ENCODE measurements at regions of chr7 and their contacts with region 1.

Region 1: DNA sequence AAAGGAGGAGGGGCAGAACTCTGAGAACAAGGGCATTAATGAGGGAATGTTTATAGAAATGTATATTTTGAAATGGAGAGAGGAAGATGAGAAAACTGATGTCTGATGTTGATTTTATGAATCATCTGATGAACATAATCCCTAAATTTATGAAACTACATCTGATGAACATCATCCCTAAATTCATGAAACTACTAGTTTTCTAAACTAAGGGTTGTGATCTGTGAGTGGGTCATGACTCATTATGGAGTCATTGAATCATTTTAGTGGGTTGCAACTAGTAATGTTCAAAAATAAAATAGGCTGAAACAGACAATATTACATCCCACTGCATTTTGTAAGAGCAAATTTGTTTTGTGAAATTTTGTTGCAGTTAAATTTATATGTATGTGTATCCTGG is 442.6 kb upstream of the TEX47 start:
- DNase-seq: peak; percentile 28
- ATAC-seq: no peak
- H3K4me3 ChIP-seq: no peak overlapping the region
- H3K27ac ChIP-seq: no peak overlapping the region
- H3K4me1 ChIP-seq: no peaks in the 10 kb centered on the region
- H3K27me3 ChIP-seq: no peaks in the 10 kb centered on the region
- CTCF ChIP-seq: no peak
- POLR2A ChIP-seq: no peak
- RAD21 ChIP-seq: no peak

Region 2: GRCh38 chr7:89072081-89072480 is 166.1 kb before region 1 on chr7:
- CTCF ChIA-PET with region 1: no interaction called
- POLR2A ChIA-PET with region 1: no interaction called
- dilution Hi-C with region 1: no loop called
- in situ Hi-C with region 1: no loop called
- intact Hi-C with region 1: no loop called
- DNase-seq: no peak
- ATAC-seq: no peak
- H3K4me3 ChIP-seq: no peak overlapping the region
- H3K27ac ChIP-seq: no peak overlapping the region
- H3K4me1 ChIP-seq: no peaks in the 10 kb centered on the region
- H3K27me3 ChIP-seq: no peaks in the 10 kb centered on the region
- CTCF ChIP-seq: no peak
- POLR2A ChIP-seq: no peak
- RAD21 ChIP-seq: no peak

Region 3: GRCh38 chr7:89091550-89091949 is 146.6 kb before region 1 on chr7:
- CTCF ChIA-PET with region 1: no interaction called
- POLR2A ChIA-PET with region 1: no interaction called
- dilution Hi-C with region 1: no loop called
- in situ Hi-C with region 1: no loop called
- intact Hi-C with region 1: no loop called
- DNase-seq: no peak
- ATAC-seq: no peak
- H3K4me3 ChIP-seq: no peak overlapping the region
- H3K27ac ChIP-seq: no peak overlapping the region
- H3K4me1 ChIP-seq: no peaks in the 10 kb centered on the region
- H3K27me3 ChIP-seq: no peaks in the 10 kb centered on the region
- CTCF ChIP-seq: no peak
- POLR2A ChIP-seq: no peak
- RAD21 ChIP-seq: no peak

Region 4: DNA sequence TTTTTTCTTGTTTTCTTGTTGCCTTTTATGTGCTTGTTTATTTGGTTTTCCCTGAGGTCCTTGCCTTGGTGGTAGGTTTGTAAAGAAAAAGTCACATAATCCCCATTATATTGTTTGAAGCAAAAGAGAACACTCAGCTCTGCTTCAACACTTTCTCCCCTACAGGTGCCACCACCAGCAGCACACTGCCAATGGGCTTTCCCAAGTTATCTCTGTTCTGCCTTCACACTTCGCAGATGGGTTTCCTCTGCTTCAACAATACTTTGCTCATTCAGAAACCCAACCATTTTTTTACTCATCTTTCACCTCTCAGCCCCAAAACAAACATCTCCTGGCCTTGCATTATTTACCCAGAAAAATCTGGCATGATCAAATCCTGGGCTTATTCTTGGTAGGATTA is 67.5 kb before region 1 on chr7:
- CTCF ChIA-PET with region 1: no interaction called
- POLR2A ChIA-PET with region 1: no interaction called
- dilution Hi-C with region 1: no loop called
- in situ Hi-C with region 1: no loop called
- intact Hi-C with region 1: loop called (anchors 10 kb)
- DNase-seq: no peak
- ATAC-seq: no peak
- H3K4me3 ChIP-seq: no peak overlapping the region
- H3K27ac ChIP-seq: no peak overlapping the region
- H3K4me1 ChIP-seq: no peaks in the 10 kb centered on the region
- H3K27me3 ChIP-seq: no peaks in the 10 kb centered on the region
- CTCF ChIP-seq: no peak
- POLR2A ChIP-seq: no peak
- RAD21 ChIP-seq: no peak

Region 5: GRCh38 chr7:89798599-89798996 is 560.4 kb after region 1 on chr7:
- CTCF ChIA-PET with region 1: no interaction called
- POLR2A ChIA-PET with region 1: no interaction called
- dilution Hi-C with region 1: no loop called
- in situ Hi-C with region 1: no loop called
- intact Hi-C with region 1: no loop called
- DNase-seq: no peak
- ATAC-seq: no peak
- H3K4me3 ChIP-seq: no peak overlapping the region
- H3K27ac ChIP-seq: no peak overlapping the region
- H3K4me1 ChIP-seq: no peaks in the 10 kb centered on the region
- H3K27me3 ChIP-seq: no peaks in the 10 kb centered on the region
- CTCF ChIP-seq: no peak
- POLR2A ChIP-seq: no peak
- RAD21 ChIP-seq: no peak

Measured in IMR-90 (cell line).